Natural killer cell (primary cell): ENCODE measurements at regions of chr10 and their contacts with region 1.

Region 1: DNA sequence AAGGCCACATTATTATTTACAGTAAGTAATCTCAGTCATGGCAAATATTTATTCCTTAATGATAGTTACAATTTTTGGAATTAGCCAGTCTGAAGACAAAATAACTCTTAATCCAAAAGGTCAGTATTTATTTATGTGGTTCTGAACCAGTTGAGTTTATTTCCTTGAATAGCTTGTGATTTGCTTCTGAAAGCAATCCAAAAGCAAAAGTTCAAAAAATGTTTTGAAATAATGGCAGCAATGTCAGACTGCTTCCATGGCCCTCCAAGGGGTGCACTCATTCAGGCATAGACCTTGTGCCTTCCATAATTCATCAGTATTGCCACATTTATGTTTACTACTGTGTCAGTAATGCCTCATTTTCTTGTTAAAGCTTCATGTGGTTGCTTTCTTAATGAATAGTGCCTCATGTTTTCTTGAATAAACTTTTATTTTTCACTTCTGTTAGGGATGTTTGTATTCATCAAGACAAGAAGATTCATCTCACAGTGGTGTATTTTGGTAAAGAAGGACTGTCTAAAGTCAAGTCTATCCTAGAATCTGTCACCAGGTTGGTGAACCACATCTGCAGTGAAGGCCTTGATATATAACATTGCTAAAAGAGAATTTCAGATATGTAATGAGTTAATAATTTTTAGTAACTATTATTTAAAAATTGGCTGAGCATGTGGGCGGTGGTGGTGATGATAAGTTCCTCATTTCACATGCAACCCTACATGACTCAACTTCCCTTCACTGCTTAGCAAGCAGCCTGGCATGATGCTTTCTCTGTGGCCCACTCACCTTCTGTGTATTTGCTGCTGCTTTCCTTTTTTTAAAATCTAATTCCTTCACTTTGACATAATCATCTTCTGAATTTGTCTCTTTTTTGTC is 22.0 kb downstream of the CSGALNACT2 start:
- DNase-seq: no peak
- ATAC-seq: peak in 1 of 3 donors; percentile 47
- H3K4me3 ChIP-seq: no peak overlapping the region
- H3K4me3 Mint-ChIP-seq: peak overlapping the region; percentile 3
- H3K27ac ChIP-seq: no peak overlapping the region
- H3K27ac Mint-ChIP-seq: peak overlapping the region; percentile 65 to 71
- H3K4me1 ChIP-seq: peaks cover 27% of the 10 kb centered on the region
- H3K4me1 Mint-ChIP-seq: peaks cover 62 to 69% of the 10 kb centered on the region in 2 donors
- H3K27me3 ChIP-seq: no peaks in the 10 kb centered on the region
- H3K27me3 Mint-ChIP-seq: no peaks in the 10 kb centered on the region
- CTCF ChIP-seq: no peak

Region 2: GRCh38 chr10:43128958-43129706 is 31.1 kb before region 1 on chr10:
- intact Hi-C with region 1: loop called (anchors 5 kb)
- DNase-seq: peak in 1 of 2 donors; percentile 44
- ATAC-seq: peak; percentile 79 to 87 (median 87)
- H3K4me3 ChIP-seq: no peak overlapping the region
- H3K4me3 Mint-ChIP-seq: peak overlapping the region; percentile 7
- H3K27ac ChIP-seq: peak overlapping the region; percentile 76
- H3K27ac Mint-ChIP-seq: peak overlapping the region; percentile 89 to 93
- H3K4me1 ChIP-seq: peaks cover 36% of the 10 kb centered on the region
- H3K4me1 Mint-ChIP-seq: peaks cover 39 to 48% of the 10 kb centered on the region in 2 donors
- H3K27me3 ChIP-seq: no peaks in the 10 kb centered on the region
- H3K27me3 Mint-ChIP-seq: no peaks in the 10 kb centered on the region
- CTCF ChIP-seq: no peak